ENCODE measurements at regions of chr2 and their contacts with region 1.

Region 1: DNA sequence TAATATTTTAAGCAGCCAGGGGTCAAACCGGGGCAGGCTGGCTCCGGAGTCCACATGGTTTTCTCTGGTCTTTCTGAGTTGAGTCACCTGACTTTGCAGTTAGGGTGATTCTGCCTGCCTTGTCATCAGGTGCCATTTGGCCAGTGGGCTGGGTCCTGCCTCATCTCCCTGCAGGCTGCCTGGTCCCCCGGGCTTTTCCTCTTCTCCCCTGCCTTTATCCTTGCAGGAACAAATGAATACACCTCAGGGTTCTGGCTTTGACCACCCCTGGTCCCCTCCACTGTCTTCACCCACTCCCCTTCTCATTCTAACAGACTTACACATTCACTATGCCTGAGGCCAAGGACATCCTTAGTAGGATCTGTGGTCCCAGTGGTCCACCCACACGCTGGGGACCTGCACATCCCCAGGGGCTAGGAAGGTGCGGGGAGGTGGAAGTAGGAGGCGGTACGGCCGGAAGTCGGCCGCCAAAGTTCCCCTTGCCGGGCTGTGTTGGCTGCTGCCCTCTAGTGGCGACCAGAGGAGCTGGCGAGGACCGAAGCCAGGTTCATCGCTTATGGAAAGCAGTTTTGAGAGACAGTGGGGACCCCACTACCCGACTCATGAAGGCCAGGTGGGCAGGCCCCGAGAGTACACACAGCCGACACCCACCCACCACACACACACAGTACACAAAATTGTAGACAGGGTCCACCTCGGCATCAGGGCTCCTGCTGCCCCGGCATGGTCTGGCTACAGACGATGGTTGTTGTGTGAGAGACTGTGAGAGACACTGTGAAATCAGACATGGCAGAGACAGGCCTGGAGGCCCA is 6.3 kb upstream of the TEX261 start:
- DNase-seq: peak; percentile 64
- H3K4me3 Mint-ChIP-seq: peak overlapping the region; percentile 68
- H3K27ac Mint-ChIP-seq: no peak overlapping the region
- H3K4me1 Mint-ChIP-seq: no peaks in the 10 kb centered on the region
- H3K27me3 Mint-ChIP-seq: no peaks in the 10 kb centered on the region
- CTCF ChIP-seq: peak; percentile 82

Region 2: GRCh38 chr2:70851704-70852103 is 149.3 kb before region 1 on chr2:
- CTCF ChIA-PET with region 1: no interaction called
- POLR2A ChIA-PET with region 1: no interaction called
- intact Hi-C with region 1: no loop called
- DNase-seq: no peak
- H3K4me3 Mint-ChIP-seq: no peak overlapping the region
- H3K27ac Mint-ChIP-seq: no peak overlapping the region
- H3K4me1 Mint-ChIP-seq: peaks cover 6% of the 10 kb centered on the region
- H3K27me3 Mint-ChIP-seq: peaks cover 24% of the 10 kb centered on the region
- CTCF ChIP-seq: no peak

Region 3: GRCh38 chr2:70964596-70965386 is 36.2 kb before region 1 on chr2:
- CTCF ChIA-PET with region 1: interaction called, 10 read pairs
- POLR2A ChIA-PET with region 1: no interaction called
- intact Hi-C with region 1: no loop called
- DNase-seq: peak; percentile 43
- H3K4me3 Mint-ChIP-seq: peak overlapping the region; percentile 63
- H3K27ac Mint-ChIP-seq: no peak overlapping the region
- H3K4me1 Mint-ChIP-seq: no peaks in the 10 kb centered on the region
- H3K27me3 Mint-ChIP-seq: peaks cover 44% of the 10 kb centered on the region
- CTCF ChIP-seq: peak; percentile 57

Region 4: GRCh38 chr2:71157124-71157793 is 156.3 kb after region 1 on chr2:
- CTCF ChIA-PET with region 1: no interaction called
- POLR2A ChIA-PET with region 1: no interaction called
- intact Hi-C with region 1: no loop called
- DNase-seq: peak; percentile 60
- H3K4me3 Mint-ChIP-seq: peak overlapping the region; percentile 13
- H3K27ac Mint-ChIP-seq: no peak overlapping the region
- H3K4me1 Mint-ChIP-seq: peaks cover 16% of the 10 kb centered on the region
- H3K27me3 Mint-ChIP-seq: no peaks in the 10 kb centered on the region
- CTCF ChIP-seq: peak; percentile 70